PC-9 (cell line): ENCODE measurements at regions of chr2 and their contacts with region 1.

Region 1: DNA sequence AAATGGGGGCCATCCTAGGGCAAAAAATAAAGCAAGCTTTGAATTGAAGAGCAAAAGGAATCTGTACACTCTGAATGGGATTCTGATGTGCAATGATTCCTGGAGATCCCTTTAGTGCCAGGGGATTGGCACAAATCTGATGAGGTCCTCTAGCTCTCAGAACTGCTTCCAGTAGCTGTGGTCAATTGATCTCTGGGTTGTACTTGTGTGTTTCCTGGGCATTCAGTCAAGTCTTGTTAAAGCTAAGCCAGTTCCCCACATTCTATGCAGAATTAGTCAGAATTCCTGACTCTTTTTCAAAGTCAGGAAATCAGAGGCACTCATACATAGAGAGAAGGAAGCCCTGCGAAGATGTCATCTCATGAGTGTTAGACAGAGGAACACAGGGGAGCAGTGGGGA is 161.3 kb downstream of the DNER start:
- DNase-seq: no peak
- H3K4me3 ChIP-seq: no peak overlapping the region
- H3K27ac ChIP-seq: no peak overlapping the region
- H3K4me1 ChIP-seq: no peaks in the 10 kb centered on the region
- H3K27me3 ChIP-seq: no peaks in the 10 kb centered on the region
- CTCF ChIP-seq: no peak

Region 2: GRCh38 chr2:228913176-228913575 is 639.9 kb before region 1 on chr2:
- CTCF ChIA-PET with region 1: no interaction called
- POLR2A ChIA-PET with region 1: interaction called, 11 read pairs
- intact Hi-C with region 1: no loop called
- DNase-seq: no peak
- H3K4me3 ChIP-seq: no peak overlapping the region
- H3K27ac ChIP-seq: no peak overlapping the region
- H3K4me1 ChIP-seq: no peaks in the 10 kb centered on the region
- H3K27me3 ChIP-seq: no peaks in the 10 kb centered on the region
- CTCF ChIP-seq: no peak